ENCODE measurements at regions of chr6 and their contacts with region 1.

Region 1: GRCh38 chr6:25601800-25602673 is 50.0 kb upstream of the SCGN start:
- DNase-seq: peak; percentile 60
- ATAC-seq: no peak; the same call in 2 of the 3 replicates
- H3K4me3 ChIP-seq: no peak overlapping the region
- H3K27ac ChIP-seq: no peak overlapping the region
- H3K4me1 ChIP-seq: peaks cover 15% of the 10 kb centered on the region
- H3K27me3 ChIP-seq: no peaks in the 10 kb centered on the region
- CTCF ChIP-seq: peak; percentile 66
- EP300 ChIP-seq: no peak
- POLR2A ChIP-seq: no peak
- RAD21 ChIP-seq: peak; percentile 67; the same call in 1 of the 2 replicates

Region 2: DNA sequence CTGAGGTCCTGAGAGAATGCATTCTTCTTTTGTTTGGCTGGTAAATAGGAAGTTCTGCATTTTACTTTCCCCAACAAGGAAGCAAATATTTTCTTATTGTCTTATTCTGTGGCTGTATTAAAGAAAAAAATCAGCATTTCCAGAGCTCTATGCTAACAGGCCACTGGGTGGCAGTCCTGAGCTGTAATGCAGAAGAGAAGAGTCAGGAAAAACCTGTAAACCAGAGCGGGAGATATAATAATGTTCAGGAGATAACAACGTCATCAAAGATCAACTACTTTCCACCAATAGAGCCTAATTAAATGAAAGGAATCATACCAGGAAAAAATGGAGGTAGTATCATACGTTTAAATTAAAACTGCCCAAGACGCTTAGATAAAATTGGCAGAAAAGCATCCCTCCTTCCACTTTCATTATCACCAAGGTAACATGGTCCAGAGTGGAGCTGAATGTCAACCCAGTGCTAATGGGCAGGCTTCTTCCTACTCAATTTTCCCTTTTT is 378.5 kb before region 1 on chr6:
- CTCF ChIA-PET with region 1: interaction called, 33 read pairs
- POLR2A ChIA-PET with region 1: no interaction called
- in situ Hi-C with region 1: loop called (anchors 5 kb)
- intact Hi-C with region 1: loop called (anchors 1 kb)
- DNase-seq: peak; percentile 54
- ATAC-seq: peak; percentile 73
- H3K4me3 ChIP-seq: no peak overlapping the region
- H3K27ac ChIP-seq: no peak overlapping the region
- H3K4me1 ChIP-seq: no peaks in the 10 kb centered on the region
- H3K27me3 ChIP-seq: 0 out of 5 replicates have a peak, but pooled peaks cover 0 to 4% of the 10 kb centered on the region in 2 experiments
- CTCF ChIP-seq: peak; percentile 84
- EP300 ChIP-seq: no peak
- POLR2A ChIP-seq: no peak
- RAD21 ChIP-seq: peak; percentile 57; the same call in 1 of the 2 replicates

Region 3: DNA sequence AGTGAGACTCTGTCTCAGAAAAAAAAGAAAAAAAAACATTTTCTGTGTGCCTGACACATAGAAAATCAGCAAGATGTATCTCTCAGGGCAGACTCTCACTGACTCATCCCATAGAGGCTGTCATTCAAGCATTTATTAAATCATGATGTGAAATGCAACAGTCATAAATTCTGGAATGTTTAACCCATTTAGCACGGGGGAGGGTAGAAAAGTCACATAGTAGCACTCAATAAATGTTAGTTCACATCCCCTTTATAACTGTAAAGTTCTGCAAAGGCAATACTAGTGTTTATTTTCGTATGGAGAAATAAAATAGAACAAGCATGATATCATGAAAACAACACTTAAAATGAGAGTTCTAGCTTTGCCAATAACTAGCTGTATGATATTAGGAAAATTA is 338.4 kb before region 1 on chr6:
- CTCF ChIA-PET with region 1: interaction called, 18 read pairs
- POLR2A ChIA-PET with region 1: no interaction called
- in situ Hi-C with region 1: no loop called
- intact Hi-C with region 1: loop called (anchors 1 kb)
- DNase-seq: no peak
- ATAC-seq: no peak
- H3K4me3 ChIP-seq: no peak overlapping the region
- H3K27ac ChIP-seq: no peak overlapping the region
- H3K4me1 ChIP-seq: no peaks in the 10 kb centered on the region
- H3K27me3 ChIP-seq: no peaks in the 10 kb centered on the region
- CTCF ChIP-seq: no peak
- EP300 ChIP-seq: no peak
- POLR2A ChIP-seq: no peak
- RAD21 ChIP-seq: no peak

Region 4: GRCh38 chr6:25278914-25279747 is 322.9 kb before region 1 on chr6 and contains the start of gene CARMIL1:
- CTCF ChIA-PET with region 1: interaction called, 5 read pairs
- POLR2A ChIA-PET with region 1: no interaction called
- in situ Hi-C with region 1: loop called (anchors 5 kb)
- intact Hi-C with region 1: loop called (anchors 5 kb)
- DNase-seq: peak; percentile 54
- ATAC-seq: peak; percentile 92
- H3K4me3 ChIP-seq: peak within 1 kb of the TSS; percentile 67 to 81 (median 79)
- H3K27ac ChIP-seq: no peak within 1 kb of the TSS
- H3K4me1 ChIP-seq: peaks cover 35% of the 10 kb centered on the region
- H3K27me3 ChIP-seq: peaks cover 0 to 21% of the 10 kb centered on the region in 2 experiments; a peak in 3 of 5 replicates
- CTCF ChIP-seq: peak; percentile 86
- EP300 ChIP-seq: no peak
- POLR2A ChIP-seq: no peak
- RAD21 ChIP-seq: peak; percentile 91
- total RNA-seq, gene CARMIL1: 2.6 and 2.9 TPM in 2 replicates

Region 5: GRCh38 chr6:25490018-25490801 is 111.8 kb before region 1 on chr6:
- CTCF ChIA-PET with region 1: interaction called, 6 read pairs
- POLR2A ChIA-PET with region 1: no interaction called
- in situ Hi-C with region 1: no loop called
- intact Hi-C with region 1: loop called (anchors 2 kb)
- DNase-seq: peak; percentile 76
- ATAC-seq: peak; percentile 99
- H3K4me3 ChIP-seq: no peak overlapping the region
- H3K27ac ChIP-seq: no peak overlapping the region
- H3K4me1 ChIP-seq: no peaks in the 10 kb centered on the region
- H3K27me3 ChIP-seq: no peaks in the 10 kb centered on the region
- CTCF ChIP-seq: peak; percentile 92
- EP300 ChIP-seq: no peak
- POLR2A ChIP-seq: no peak
- RAD21 ChIP-seq: peak; percentile 80

Region 6: GRCh38 chr6:25556516-25556915 is 45.5 kb before region 1 on chr6:
- CTCF ChIA-PET with region 1: interaction called, 8 read pairs
- POLR2A ChIA-PET with region 1: no interaction called
- in situ Hi-C with region 1: no loop called
- intact Hi-C with region 1: loop called (anchors 2 kb)
- DNase-seq: peak; percentile 65
- ATAC-seq: peak; percentile 81
- H3K4me3 ChIP-seq: no peak overlapping the region
- H3K27ac ChIP-seq: no peak overlapping the region
- H3K4me1 ChIP-seq: no peaks in the 10 kb centered on the region
- H3K27me3 ChIP-seq: no peaks in the 10 kb centered on the region
- CTCF ChIP-seq: peak; percentile 88
- EP300 ChIP-seq: no peak
- POLR2A ChIP-seq: no peak
- RAD21 ChIP-seq: no peak

Region 7: DNA sequence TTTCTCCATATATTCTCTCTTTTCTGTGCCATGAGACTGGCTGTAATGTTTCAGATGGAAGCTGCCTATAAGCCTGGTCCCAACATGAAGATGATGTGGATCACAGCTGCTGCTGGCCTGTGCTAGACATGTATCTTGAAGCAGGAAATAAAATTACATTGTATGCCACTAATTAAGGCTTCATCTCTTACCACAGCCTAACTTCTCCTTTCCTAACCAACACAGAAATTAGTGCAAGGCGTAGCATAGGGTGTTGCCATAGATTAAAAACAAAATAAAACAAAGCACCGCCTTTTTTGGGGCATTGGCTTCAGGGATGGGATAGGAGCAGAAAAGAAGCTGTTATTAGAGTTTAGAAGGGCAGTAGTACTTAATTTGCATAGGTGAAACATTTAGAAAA is 147.8 kb after region 1 on chr6:
- CTCF ChIA-PET with region 1: no interaction called
- POLR2A ChIA-PET with region 1: no interaction called
- in situ Hi-C with region 1: no loop called
- intact Hi-C with region 1: loop called (anchors 1 kb)
- DNase-seq: no peak
- ATAC-seq: no peak
- H3K4me3 ChIP-seq: no peak overlapping the region
- H3K27ac ChIP-seq: no peak overlapping the region
- H3K4me1 ChIP-seq: peaks cover 74% of the 10 kb centered on the region
- H3K27me3 ChIP-seq: no peaks in the 10 kb centered on the region
- CTCF ChIP-seq: no peak
- EP300 ChIP-seq: no peak
- POLR2A ChIP-seq: no peak
- RAD21 ChIP-seq: no peak